Dorsolateral prefrontal cortex (tissue), 120 donors: ENCODE measurements at regions of chr13 and their contacts with region 1.

Region 1: GRCh38 chr13:19633479-19634255 is at the start of gene MPHOSPH8:
- DNase-seq: peak; percentile 88 to 95 (median 93)
- H3K4me3 ChIP-seq: peak within 1 kb of the TSS; percentile 60 to 98 (median 89)
- H3K27ac ChIP-seq: peak within 1 kb of the TSS; percentile 49 to 98 (median 91)
- H3K27me3 ChIP-seq: no peaks in the 10 kb centered on the region
- CTCF ChIP-seq: peak in 14 of 56 donors; percentile 5 to 58 (median 20)
- total RNA-seq, gene MPHOSPH8: 55.4 to 102 (median 72.7) TPM

Region 2: GRCh38 chr13:19782049-19782726 is 148.5 kb after region 1 on chr13:
- intact Hi-C with region 1: loop called (anchors 2 to 10 kb)
- DNase-seq: peak; percentile 39 to 72 (median 52)
- H3K4me3 ChIP-seq: peak overlapping the region; percentile 62 to 100 (median 94)
- H3K27ac ChIP-seq: peak overlapping the region; percentile 68 to 98 (median 93)
- H3K27me3 ChIP-seq: no peaks in the 10 kb centered on the region
- CTCF ChIP-seq: peak in 3 of 56 donors; percentile 9 to 15 (median 10)

Region 3: DNA sequence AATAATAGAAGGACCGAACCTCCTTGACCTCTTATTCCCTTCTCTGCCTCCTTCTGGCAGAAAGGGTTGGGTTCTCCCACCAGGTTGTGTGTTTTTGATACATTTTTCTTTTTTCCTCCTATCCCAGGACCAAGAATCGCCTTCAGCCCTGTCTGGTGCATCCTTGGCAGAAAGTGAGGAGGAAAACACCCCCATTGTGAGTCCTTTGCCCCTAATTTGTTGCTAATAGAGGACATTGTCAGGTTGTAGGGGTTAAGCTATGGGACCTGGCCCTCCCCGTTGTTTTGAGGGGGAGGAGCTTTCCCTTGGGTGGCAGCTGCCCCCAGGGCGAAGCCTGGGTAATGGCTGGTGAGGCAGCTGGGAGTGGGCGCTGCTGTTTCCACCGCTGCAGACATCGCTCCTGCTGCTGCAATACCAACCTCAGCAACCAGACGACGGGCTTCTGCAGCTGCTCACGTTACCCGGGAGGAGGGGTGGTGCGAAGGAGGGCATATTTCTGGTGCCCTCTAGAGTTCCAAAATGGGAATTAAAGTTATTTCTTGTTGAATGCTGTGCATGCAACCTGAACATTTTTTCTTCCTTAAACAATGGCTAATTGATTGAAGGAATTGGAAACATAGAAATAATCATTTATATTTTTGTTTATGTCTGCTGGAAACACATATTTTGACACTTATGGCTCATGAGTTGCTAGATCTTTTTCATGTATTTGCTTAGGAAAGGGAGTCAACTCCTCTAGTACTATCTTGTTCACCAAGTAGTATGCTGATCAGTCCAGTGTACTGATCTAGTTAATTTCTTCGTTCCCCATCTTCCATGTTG is 326.4 kb after region 1 on chr13:
- intact Hi-C with region 1: loop called in 1 of 2 experiments (anchors 5 kb)
- DNase-seq: peak; percentile 63 to 91 (median 84)
- H3K4me3 ChIP-seq: peak overlapping the region; percentile 62 to 95 (median 84)
- H3K27ac ChIP-seq: peak overlapping the region; percentile 89 to 100 (median 99)
- H3K27me3 ChIP-seq: no peaks in the 10 kb centered on the region
- CTCF ChIP-seq: peak; percentile 75 to 96 (median 91)